ENCODE measurements at regions of chr11 and their contacts with region 1.

Region 1: GRCh38 chr11:104609311-104610085 is 288.8 kb downstream of the CASP12 start:
- DNase-seq: peak; percentile 24
- ATAC-seq: peak; percentile 83
- H3K4me3 ChIP-seq: no peak overlapping the region
- H3K27ac ChIP-seq: no peak overlapping the region
- H3K4me1 ChIP-seq: no peaks in the 10 kb centered on the region
- H3K27me3 ChIP-seq: no peaks in the 10 kb centered on the region
- CTCF ChIP-seq: peak; percentile 65
- EP300 ChIP-seq: no peak
- POLR2A ChIP-seq: no peak
- RAD21 ChIP-seq: no peak

Region 2: GRCh38 chr11:103354656-103355055 is 1254.8 kb before region 1 on chr11:
- CTCF ChIA-PET with region 1: no interaction called
- POLR2A ChIA-PET with region 1: no interaction called
- in situ Hi-C with region 1: no loop called
- intact Hi-C with region 1: loop called (anchors 5 kb)
- DNase-seq: no peak
- ATAC-seq: no peak
- H3K4me3 ChIP-seq: no peak overlapping the region
- H3K27ac ChIP-seq: no peak overlapping the region
- H3K4me1 ChIP-seq: no peaks in the 10 kb centered on the region
- H3K27me3 ChIP-seq: no peaks in the 10 kb centered on the region
- CTCF ChIP-seq: no peak
- EP300 ChIP-seq: no peak
- POLR2A ChIP-seq: no peak
- RAD21 ChIP-seq: no peak

Region 3: GRCh38 chr11:104637657-104638170 is 28.2 kb after region 1 on chr11:
- CTCF ChIA-PET with region 1: no interaction called
- POLR2A ChIA-PET with region 1: no interaction called
- in situ Hi-C with region 1: no loop called
- intact Hi-C with region 1: no loop called
- DNase-seq: no peak
- ATAC-seq: no peak
- H3K4me3 ChIP-seq: no peak overlapping the region
- H3K27ac ChIP-seq: no peak overlapping the region
- H3K4me1 ChIP-seq: no peaks in the 10 kb centered on the region
- H3K27me3 ChIP-seq: no peaks in the 10 kb centered on the region
- CTCF ChIP-seq: no peak
- EP300 ChIP-seq: no peak
- POLR2A ChIP-seq: no peak
- RAD21 ChIP-seq: no peak

Region 4: GRCh38 chr11:105862736-105863367 is 1253.4 kb after region 1 on chr11:
- CTCF ChIA-PET with region 1: interaction called, 8 read pairs
- POLR2A ChIA-PET with region 1: no interaction called
- in situ Hi-C with region 1: no loop called
- intact Hi-C with region 1: loop called (anchors 1 kb)
- DNase-seq: peak; percentile 36
- ATAC-seq: peak; percentile 73
- H3K4me3 ChIP-seq: no peak overlapping the region
- H3K27ac ChIP-seq: no peak overlapping the region
- H3K4me1 ChIP-seq: no peaks in the 10 kb centered on the region
- H3K27me3 ChIP-seq: no peaks in the 10 kb centered on the region
- CTCF ChIP-seq: peak; percentile 66
- EP300 ChIP-seq: no peak
- POLR2A ChIP-seq: no peak
- RAD21 ChIP-seq: no peak